ENCODE measurements at regions of chr19 and their contacts with region 1.

Region 1: GRCh38 chr19:53357821-53358581 is 7.5 kb upstream of the ZNF525 start:
- DNase-seq: no peak
- H3K4me3 ChIP-seq: no peak overlapping the region
- H3K27ac ChIP-seq: no peak overlapping the region
- H3K4me1 ChIP-seq: no peaks in the 10 kb centered on the region
- H3K27me3 ChIP-seq: no peaks in the 10 kb centered on the region
- CTCF ChIP-seq: no peak
- POLR2A ChIP-seq: no peak

Region 2: GRCh38 chr19:53195265-53195903 is 162.6 kb before region 1 on chr19:
- intact Hi-C with region 1: loop called (anchors 10 kb)
- DNase-seq: no peak
- H3K4me3 ChIP-seq: no peak overlapping the region
- H3K27ac ChIP-seq: peak overlapping the region; percentile 3
- H3K4me1 ChIP-seq: peaks cover 17% of the 10 kb centered on the region
- H3K27me3 ChIP-seq: no peaks in the 10 kb centered on the region
- CTCF ChIP-seq: peak; percentile 66 to 94 (median 82)
- POLR2A ChIP-seq: no peak

Region 3: DNA sequence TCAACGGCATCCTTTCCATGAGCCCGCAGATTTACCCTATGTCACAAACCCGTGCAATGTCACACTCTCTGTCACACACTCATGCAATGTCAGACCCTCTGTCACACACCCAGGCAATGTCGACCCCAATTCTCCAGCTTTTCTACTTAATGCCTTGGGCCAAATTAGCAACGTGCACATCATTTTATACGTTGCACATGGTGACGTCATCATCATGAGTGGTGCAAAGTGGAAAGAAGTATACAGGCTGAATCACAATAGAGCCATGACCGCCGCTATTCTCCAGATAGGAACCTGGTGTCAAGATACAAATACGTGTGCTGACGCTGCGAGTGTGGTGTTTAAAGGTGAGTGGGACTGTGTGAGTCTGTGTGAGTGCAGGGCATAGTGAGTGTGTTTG is 46.1 kb before region 1 on chr19:
- intact Hi-C with region 1: no loop called
- DNase-seq: no peak
- H3K4me3 ChIP-seq: no peak overlapping the region
- H3K27ac ChIP-seq: no peak overlapping the region
- H3K4me1 ChIP-seq: no peaks in the 10 kb centered on the region
- H3K27me3 ChIP-seq: no peaks in the 10 kb centered on the region
- CTCF ChIP-seq: no peak
- POLR2A ChIP-seq: no peak

Region 4: GRCh38 chr19:53580976-53581800 is 223.2 kb after region 1 on chr19:
- intact Hi-C with region 1: no loop called
- DNase-seq: no peak
- H3K4me3 ChIP-seq: no peak overlapping the region
- H3K27ac ChIP-seq: no peak overlapping the region
- H3K4me1 ChIP-seq: no peaks in the 10 kb centered on the region
- H3K27me3 ChIP-seq: no peaks in the 10 kb centered on the region
- CTCF ChIP-seq: no peak
- POLR2A ChIP-seq: no peak